Activated CD4-positive, alpha-beta memory T cell treated with anti-CD3 and anti-CD28 coated beads for 36 hours (primary cell): ENCODE measurements at regions of chr6 and their contacts with region 1.

Region 1: DNA sequence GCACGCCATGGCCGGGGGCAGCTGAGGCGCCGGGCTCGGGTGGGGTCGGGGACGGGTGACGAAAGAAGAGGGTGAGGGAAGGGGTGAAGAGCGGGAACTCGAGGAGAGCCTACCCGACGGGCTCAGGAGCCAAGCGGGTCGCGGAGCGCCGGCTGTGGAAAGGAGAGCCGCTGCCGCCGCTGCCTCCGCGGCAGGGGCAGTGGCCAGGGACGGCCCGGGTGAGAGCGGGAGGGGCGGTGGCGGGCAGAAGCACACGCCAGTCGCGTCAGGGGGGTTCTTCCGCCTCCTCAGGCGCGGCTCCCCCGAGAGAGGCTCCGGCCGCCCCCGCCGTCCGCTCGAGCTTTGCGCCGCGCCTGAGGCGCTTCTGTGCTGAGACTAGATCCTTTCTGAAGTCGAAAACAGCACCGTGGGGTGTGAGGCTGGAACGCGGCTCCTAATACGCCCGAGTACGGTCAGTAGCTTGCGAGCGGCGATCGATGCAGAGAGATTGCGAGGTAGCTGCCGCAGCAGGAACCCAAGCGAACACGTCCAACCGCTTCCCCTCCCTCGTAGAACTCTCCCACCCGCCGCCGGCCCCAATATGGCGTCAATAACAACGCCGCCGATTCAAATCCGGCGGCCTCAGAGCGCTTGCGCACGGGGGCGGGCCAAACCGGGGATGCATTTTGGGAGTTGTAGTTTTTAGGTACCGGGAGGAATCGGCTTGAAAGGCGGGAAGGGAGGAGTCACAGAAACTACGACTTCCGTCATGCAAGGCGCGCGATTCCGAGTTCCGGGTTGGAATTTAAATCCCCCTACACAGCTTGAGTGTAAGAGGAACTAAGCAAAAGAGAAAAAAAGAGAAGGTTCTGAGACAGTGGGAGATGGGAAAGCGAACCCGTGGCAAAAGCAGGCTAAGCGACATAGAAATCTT is at the start of gene AKIRIN2:
- DNase-seq: peak; percentile 98
- H3K4me3 Mint-ChIP-seq: peak within 1 kb of the TSS; percentile 86
- H3K27ac Mint-ChIP-seq: peak within 1 kb of the TSS; percentile 91
- H3K4me1 Mint-ChIP-seq: peaks cover 43% of the 10 kb centered on the region
- H3K27me3 Mint-ChIP-seq: no peaks in the 10 kb centered on the region
- total RNA-seq, gene AKIRIN2: 45.7 to 46.0 TPM

Region 2: DNA sequence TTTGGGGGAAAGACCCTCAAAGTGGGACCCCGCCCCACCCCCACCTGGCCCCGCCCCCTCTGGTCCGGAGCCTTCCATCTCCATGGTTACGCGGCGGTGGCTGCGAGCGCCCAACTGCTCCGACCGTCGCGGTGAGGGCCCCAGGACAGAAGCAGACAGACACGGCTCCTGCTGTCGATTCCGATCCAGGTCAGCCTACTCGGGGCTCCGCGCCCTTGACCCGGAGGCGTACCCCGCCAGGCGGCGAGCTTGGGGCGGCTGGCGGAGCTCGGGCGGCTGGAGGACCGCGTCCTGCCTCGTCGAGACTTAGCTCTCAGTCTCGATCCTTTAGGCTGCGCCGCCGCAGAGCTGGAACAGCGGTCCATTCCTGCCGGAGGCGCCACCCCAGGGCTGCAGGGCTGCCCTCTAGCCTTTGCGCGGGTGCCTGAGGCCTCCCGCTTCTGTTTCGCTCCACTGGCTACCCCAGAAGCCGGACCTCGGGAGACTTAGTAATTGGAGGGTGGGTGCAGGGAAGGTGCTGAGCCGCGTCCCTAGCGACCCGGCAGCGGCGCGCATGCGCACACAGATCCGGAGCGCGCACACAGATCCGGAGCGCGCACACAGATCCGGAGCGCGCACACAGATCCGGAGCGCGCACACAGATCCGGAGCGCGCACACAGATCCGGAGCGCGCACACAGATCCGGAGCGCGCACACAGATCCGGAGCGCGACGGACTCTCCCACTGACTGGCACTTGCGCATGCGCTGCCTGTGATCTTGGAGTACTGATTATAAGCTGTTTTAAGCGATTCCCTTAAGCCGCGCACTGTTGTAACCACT is 293.8 kb before region 1 on chr6 and contains the start of gene CFAP206:
- CTCF ChIA-PET with region 1: no interaction called
- POLR2A ChIA-PET with region 1: no interaction called
- intact Hi-C with region 1: loop called (anchors 5 kb)
- DNase-seq: peak; percentile 82
- H3K4me3 Mint-ChIP-seq: peak within 1 kb of the TSS; percentile 84
- H3K27ac Mint-ChIP-seq: peak within 1 kb of the TSS; percentile 64
- H3K4me1 Mint-ChIP-seq: peaks cover 4% of the 10 kb centered on the region
- H3K27me3 Mint-ChIP-seq: peaks cover 10% of the 10 kb centered on the region
- total RNA-seq, gene CFAP206: not detected

Region 3: DNA sequence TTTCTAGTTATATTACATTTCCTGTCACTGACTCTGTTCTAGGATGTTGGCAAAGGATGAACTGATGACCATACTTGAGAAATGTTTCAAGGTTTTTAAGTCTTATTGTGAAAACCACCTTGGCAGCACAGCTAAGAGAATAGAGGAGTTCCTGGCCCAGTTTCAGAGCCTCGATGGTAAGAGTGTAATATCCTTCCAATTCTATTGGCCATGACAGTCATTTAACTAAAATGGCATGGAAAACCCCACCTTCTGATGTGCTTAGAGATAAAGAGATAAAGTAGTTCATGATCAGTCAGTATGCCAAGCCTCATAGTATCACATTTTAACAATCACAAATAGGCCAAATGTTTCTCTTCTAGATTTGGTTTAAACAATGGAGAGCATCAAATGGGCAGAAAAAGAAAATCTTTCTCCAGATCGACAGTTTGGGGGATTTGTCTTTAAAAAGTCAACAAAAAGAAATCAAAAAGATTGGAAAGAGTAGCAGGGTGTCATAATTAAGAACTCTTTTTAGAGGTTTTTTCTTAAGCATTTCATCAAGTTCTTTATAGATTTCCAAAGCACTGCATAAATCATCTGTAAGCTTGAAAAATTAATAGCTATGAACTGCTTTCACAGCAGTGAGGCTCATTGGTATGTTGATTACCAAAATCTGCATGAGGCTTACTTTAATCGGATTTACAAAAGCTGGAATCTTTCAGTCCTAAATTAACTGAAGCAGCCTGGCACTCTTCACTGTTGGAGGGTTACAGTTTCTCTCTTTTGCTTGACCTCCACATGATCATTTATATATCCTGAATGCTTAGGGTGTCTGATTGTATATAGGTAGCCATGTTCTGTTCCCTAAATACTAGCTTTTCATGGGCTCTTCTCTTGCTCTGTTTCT is 48.6 kb before region 1 on chr6:
- CTCF ChIA-PET with region 1: interaction called, 3 read pairs
- POLR2A ChIA-PET with region 1: interaction called, 3 read pairs
- intact Hi-C with region 1: loop called (anchors 1 kb)
- DNase-seq: peak; percentile 26
- H3K4me3 Mint-ChIP-seq: no peak overlapping the region
- H3K27ac Mint-ChIP-seq: peak overlapping the region; percentile 60
- H3K4me1 Mint-ChIP-seq: peaks cover 33% of the 10 kb centered on the region
- H3K27me3 Mint-ChIP-seq: no peaks in the 10 kb centered on the region

Region 4: GRCh38 chr6:87731818-87732661 is 30.1 kb after region 1 on chr6:
- CTCF ChIA-PET with region 1: interaction called, 8 read pairs
- POLR2A ChIA-PET with region 1: interaction called, 10 read pairs
- intact Hi-C with region 1: loop called (anchors 1 kb)
- DNase-seq: peak; percentile 65
- H3K4me3 Mint-ChIP-seq: peak overlapping the region; percentile 13
- H3K27ac Mint-ChIP-seq: peak overlapping the region; percentile 24
- H3K4me1 Mint-ChIP-seq: peaks cover 34% of the 10 kb centered on the region
- H3K27me3 Mint-ChIP-seq: no peaks in the 10 kb centered on the region

Region 5: GRCh38 chr6:87922947-87923330 is 221.0 kb after region 1 on chr6:
- CTCF ChIA-PET with region 1: no interaction called
- POLR2A ChIA-PET with region 1: no interaction called
- intact Hi-C with region 1: loop called (anchors 5 kb)
- DNase-seq: no peak
- H3K4me3 Mint-ChIP-seq: no peak overlapping the region
- H3K27ac Mint-ChIP-seq: no peak overlapping the region
- H3K4me1 Mint-ChIP-seq: peaks cover 3% of the 10 kb centered on the region
- H3K27me3 Mint-ChIP-seq: peaks cover 5% of the 10 kb centered on the region